Left cardiac atrium (tissue), 4 donors: ENCODE measurements at regions of chr6 and their contacts with region 1.

Region 1: DNA sequence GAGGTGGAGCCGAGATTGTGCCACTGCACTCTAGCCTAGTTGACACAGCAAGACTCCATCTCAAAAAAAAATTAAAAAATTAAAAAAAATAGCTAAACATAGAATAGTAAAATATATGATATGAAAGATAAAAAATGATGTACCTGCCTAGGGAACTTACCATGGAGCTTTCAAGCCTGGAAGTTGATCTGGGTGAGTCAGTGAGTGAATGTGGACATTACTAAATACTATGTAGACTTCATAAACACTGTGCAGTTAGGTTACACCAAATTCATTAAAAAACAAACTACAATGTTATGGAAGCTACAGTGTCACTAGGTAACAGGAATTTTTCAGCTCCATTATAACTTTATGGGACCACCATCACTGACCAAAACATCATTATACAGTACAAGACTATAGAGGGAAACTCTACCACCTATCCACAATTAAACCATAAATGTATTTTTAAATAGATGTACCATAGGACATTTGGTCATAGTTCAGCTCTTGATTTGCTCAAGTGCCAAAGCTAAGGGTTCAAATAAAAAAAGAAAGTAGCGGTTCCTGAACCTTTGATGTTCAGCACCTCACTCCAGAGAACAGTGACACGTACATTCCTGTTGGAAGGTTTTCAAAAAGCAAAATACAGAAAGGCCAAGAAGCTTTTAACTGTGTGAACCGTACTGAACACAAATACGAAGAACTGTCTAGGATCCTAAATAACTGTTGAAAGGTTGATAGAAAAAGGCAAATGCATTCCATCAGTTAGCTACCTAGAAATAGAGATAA is 52.4 kb upstream of the SPDEF start:
- DNase-seq: no peak
- ATAC-seq: no peak

Region 2: DNA sequence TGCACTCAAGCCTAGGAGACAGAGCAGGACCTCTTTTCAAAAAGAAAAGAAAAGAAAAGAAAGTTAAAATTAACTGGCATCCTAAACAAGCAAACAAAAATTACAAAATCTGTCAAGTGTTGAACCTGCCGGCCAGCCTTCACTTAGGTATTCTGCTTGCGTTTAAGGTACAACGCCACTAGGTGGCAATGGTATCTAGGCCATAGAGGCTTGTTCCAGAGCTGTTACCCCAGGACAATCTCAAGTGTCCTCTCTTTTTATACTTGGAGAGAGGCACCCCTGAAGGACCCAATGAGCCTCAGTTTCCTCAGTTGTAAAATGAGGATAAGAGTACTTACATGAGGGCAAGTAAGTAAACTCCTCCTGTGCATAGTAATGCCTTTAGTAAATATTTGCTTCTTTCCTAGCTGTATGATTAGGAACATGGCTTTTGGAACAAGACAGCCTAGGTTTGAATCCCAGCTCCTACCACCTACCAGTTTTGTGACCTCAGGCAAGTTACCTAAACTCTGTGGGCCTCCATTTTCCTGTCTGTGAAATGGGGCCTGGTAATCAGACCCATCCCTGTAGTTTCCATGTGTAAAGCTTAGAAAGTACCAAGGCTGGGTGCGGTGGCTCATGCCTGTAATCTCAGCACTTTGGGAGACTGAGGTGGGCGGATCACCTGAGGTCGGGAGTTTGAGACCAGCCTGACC is 148.5 kb before region 1 on chr6:
- intact Hi-C with region 1: loop called (anchors 2 to 5 kb)
- DNase-seq: no peak
- ATAC-seq: peak in 1 of 2 donors; percentile 40

Region 3: DNA sequence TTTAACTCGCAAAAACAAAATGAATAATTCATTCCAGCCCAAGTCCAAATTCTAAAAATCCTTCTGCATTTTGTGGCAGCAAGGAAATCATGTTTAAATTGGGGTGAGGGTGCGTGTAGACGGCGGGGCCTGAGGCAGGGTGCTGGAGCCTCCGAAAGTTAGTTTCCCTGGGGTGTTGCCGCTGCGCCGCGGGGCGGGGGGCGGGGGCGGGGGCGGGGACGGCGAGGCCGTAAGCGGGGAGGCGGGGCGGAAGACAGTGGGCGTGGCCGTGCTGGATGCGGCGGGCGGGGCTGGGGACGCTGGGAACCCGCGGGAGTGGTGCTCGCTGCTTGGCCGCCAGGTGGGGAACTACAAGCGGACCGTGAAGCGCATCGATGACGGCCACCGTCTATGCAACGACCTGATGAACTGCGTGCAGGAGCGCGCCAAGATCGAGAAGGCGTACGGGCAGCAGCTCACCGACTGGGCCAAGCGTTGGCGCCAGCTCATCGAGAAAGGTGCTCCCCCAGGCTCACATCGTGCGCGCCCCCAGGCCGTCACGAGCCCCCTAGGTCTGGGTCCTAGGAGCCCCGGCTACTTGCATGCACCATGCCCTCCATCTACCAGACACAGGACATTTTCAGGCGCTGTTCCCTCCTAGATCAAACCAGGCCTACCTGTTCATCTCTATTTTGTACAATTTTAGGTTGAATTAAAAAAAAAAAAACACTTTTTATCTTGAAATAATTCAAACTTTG is 81.3 kb before region 1 on chr6:
- intact Hi-C with region 1: loop called (anchors 1 to 5 kb)
- DNase-seq: peak; percentile 97
- ATAC-seq: peak; percentile 94 to 98